AG04449 (cell line): ENCODE measurements at regions of chr9 and their contacts with region 1.

Region 1: GRCh38 chr9:12719431-12719830 is 26.2 kb downstream of the TYRP1 start:
- DNase-seq: no peak
- H3K4me3 ChIP-seq: no peak overlapping the region
- CTCF ChIP-seq: peak; percentile 34

Region 2: DNA sequence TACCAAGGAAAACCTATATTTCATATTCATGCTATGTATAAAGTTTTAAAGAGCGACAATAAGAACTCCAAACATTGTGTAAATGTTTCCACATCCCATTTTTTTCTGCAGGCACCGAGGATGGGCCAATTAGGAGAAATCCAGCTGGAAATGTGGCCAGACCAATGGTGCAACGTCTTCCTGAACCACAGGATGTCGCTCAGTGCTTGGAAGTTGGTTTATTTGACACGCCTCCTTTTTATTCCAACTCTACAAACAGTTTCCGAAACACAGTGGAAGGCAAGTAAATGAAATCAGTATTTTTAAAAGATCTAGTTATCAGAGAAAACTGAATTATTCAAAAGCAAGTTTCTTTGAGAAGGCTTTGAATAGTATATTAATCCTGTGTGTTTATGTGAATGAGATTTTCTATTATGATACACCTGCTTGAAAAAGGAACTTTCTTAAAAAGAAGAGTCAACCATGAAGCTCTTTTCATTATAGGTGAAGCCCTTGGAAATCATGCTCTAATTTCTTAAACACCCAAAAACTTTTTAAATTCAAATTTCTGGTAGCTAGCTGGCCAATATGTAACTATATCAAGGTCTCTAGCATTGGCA is 17.2 kb before region 1 on chr9:
- CTCF ChIA-PET with region 1: interaction called, 22 read pairs
- POLR2A ChIA-PET with region 1: no interaction called
- DNase-seq: no peak
- H3K4me3 ChIP-seq: no peak overlapping the region
- CTCF ChIP-seq: peak; percentile 68

Region 3: DNA sequence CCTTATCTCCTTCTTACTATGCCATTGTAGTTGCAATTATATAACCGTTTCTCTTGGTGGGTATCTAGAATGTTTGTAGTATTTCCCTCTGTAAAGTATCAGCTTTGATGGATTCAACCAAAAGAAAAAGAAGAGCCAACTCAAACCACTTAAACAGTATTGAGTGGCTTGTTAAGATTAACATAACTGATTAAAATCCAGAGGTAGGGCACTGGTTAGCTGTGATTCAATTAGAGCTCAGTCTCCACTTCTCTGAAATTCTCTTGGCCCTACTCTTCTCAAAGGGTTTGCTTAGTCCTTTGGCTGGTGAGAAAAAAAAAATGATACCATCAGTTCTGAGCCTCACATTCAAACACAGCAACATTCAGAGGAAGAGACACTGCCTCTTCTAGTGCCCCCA is 10.8 kb after region 1 on chr9:
- CTCF ChIA-PET with region 1: interaction called, 25 read pairs
- POLR2A ChIA-PET with region 1: no interaction called
- DNase-seq: no peak
- H3K4me3 ChIP-seq: no peak overlapping the region
- CTCF ChIP-seq: no peak

Region 4: DNA sequence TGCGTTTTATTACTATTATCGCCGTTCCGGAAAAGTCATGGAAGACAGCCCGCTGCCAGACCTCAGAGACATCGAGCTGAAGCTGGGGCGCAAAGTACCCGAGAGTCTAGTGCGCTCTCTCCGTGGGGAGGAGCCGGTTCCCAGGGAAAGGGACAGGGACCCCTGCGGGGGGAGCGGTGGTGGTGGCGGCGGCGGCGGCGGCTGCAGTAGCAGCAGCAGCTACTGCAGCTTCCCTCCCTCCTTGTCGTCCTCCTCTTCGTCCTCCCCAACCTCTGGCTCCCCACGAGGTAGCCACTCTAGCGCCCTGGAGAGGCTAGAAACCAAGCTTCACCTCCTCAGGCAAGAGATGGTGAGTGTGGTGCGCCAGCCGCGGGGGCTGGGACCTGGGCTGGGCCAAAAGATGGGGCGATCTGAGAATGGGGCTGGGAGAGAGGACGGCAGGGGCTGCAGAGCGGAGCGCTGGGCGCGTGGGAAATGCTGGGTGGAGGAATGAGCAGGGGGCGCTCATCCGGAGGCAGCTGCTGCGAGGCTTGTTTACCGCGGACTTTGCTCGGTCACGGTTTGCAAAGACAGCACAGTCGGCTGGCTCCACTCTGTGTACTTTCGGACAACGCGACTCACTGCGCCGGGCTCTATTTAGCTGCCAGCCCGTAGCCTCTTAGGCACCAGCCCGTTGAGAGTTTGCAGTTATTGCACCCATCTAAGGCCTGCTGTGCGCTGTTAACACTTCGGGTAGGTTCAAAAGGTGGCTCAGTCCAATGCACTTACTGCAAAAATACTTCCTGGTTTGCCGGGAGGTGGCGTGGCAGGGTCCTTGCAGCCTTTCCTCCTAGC is 56.5 kb after region 1 on chr9:
- CTCF ChIA-PET with region 1: interaction called, 32 read pairs
- POLR2A ChIA-PET with region 1: no interaction called
- DNase-seq: no peak
- H3K4me3 ChIP-seq: peak overlapping the region; percentile 85
- CTCF ChIP-seq: peak; percentile 72

Region 5: DNA sequence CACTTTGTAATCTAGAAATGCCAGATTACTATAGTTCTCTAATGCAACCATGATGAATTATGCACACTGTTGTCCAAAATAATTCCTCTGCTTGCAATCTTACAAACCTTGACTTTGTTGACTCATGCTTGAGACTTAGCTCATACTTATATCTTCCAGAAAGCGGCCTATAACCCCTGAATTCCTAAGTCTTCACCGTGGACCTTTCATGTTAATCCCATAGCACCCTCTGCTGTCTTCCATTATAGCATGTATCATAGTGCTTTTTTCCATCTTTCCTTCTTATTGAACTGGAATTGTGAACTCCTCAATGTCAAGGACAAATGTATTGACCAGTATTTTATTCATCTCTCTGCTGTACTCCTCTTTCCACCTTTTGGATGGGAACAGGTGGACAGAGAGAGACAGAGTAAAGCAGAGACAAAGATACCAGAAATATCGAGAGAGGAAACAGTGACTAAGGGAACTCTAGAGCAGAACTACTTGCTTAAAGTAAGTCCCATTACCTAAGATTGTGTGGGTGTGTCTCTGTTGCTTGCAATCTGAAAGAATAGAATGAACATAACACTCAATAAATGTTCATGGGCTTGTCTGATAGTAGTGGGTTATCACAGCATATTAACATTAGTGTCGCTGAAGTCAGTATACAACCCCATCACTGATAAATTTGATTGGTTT is 165.4 kb after region 1 on chr9:
- CTCF ChIA-PET with region 1: interaction called, 255 read pairs
- POLR2A ChIA-PET with region 1: interaction called, 3 read pairs
- DNase-seq: peak; percentile 44
- H3K4me3 ChIP-seq: no peak overlapping the region
- CTCF ChIP-seq: peak; percentile 37